Heart left ventricle (tissue), 16 donors: ENCODE measurements at regions of chr6 and their contacts with region 1.

Region 1: DNA sequence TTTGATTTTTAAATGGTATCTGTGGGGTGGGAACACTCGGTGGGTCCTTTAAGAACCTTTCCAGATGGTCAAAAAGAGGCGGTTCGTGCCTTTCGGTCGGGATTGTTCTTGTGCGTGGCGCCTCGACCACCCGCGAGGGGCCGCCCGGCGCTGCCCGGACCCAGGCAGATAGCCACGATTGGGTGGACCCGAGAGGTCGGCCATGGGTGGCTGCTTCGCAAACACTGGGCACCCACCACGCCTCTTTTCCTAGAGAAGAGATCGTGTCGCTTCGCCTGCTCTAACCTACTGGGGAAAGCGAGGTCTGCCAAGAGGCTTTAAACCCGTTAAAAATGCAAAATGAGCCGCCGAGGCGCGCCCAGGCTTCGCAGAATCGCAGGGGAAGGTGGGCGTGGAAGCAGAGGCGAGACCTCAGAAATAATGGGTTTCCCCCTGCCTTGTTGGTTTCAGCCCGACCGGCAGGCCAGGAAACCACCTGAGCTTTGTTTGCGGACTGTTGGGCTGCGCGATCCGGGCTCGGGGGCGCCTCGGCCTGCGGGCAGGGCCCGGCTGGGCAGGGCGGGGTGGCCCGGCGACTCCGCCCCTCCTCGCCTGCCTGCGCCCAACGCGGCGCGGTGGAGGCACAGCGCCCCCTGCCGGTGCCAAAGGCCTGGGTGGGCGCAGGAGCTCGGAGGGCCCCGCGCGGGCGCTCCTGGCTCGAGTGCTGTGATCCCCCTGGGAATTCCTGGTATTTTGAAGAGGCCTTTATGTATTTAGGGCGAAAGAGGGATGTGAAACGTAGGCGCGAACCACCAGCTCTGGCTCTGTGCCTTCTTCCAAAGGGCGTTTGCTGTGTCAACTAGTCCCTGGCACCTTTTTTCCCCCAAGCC is 1.6 kb downstream of the MARCKS start:
- DNase-seq: peak; percentile 82 to 95 (median 89)
- ATAC-seq: peak; percentile 80 to 95 (median 88)
- H3K4me3 ChIP-seq: peak overlapping the region; percentile 59 to 91 (median 70)
- H3K27ac ChIP-seq: peak overlapping the region; percentile 85 to 96 (median 92)
- H3K4me1 ChIP-seq: peaks cover 0 to 46% (median 10%) of the 10 kb centered on the region in 12 donors
- H3K27me3 ChIP-seq: peaks cover 0 to 15% (median 0%) of the 10 kb centered on the region in 9 donors
- CTCF ChIP-seq: peak; percentile 84 to 99 (median 95)
- POLR2A ChIP-seq: peak in 1 of 2 donors; percentile 76

Region 2: DNA sequence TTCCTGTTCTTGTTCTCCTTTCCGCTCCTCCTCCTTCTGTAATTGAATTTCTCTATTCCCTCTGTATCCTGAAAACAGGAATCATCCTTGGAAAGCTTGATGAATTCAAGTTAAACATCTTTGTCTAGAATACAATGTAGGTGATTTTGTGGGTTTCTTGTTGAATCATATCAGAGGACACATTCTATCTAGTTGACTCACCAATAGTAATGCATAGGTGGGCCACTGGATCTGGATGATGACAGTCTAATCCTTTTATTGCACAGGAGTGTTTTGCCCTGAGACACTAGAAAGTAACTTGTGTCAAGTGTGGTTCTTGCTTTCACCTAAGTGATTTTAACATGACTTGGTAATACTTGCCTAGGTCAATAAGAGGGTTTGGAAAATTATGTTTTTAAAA is 1347.3 kb before region 1 on chr6:
- intact Hi-C with region 1: no loop called
- DNase-seq: no peak
- ATAC-seq: no peak
- H3K4me3 ChIP-seq: no peak overlapping the region
- H3K27ac ChIP-seq: no peak overlapping the region
- H3K4me1 ChIP-seq: no peaks in the 10 kb centered on the region
- H3K27me3 ChIP-seq: no peaks in the 10 kb centered on the region
- CTCF ChIP-seq: no peak
- POLR2A ChIP-seq: no peak

Region 3: DNA sequence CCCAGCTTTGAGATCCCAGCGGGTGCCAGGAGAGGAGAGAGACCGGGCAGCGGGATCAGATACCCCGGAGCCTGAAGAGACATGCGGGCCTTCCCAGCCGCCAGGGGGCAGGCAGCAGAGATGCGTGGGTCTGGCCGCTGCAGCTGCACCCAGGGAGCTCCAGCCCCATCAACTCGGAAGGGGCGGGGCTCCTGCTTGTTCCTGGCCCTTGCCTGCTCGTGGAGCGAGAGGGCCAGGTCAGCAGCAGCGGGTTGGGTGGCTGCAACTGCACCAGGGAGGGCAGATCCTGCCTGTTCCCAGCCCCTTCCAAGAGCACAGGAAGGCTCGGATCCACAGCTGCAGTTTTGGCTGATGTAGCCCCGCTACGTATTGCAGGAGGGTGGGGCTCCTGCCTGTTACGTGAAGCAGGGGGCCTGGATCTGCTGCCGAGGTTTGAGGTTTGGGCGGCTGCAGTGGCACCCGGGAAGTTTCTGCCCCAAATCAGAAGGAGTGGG is 978.7 kb before region 1 on chr6:
- intact Hi-C with region 1: loop called in 1 of 10 experiments (anchors 5 kb)
- DNase-seq: peak in 3 of 5 donors; percentile 25 to 52 (median 39)
- ATAC-seq: peak in 2 of 4 donors; percentile 65 to 81
- H3K4me3 ChIP-seq: peak overlapping the region in 1 of 12 donors; percentile 10
- H3K27ac ChIP-seq: no peak overlapping the region
- H3K4me1 ChIP-seq: peaks cover 0 to 10% (median 0%) of the 10 kb centered on the region in 12 donors
- H3K27me3 ChIP-seq: no peaks in the 10 kb centered on the region
- CTCF ChIP-seq: peak in 2 of 12 donors; percentile 14 to 18
- POLR2A ChIP-seq: no peak

Region 4: DNA sequence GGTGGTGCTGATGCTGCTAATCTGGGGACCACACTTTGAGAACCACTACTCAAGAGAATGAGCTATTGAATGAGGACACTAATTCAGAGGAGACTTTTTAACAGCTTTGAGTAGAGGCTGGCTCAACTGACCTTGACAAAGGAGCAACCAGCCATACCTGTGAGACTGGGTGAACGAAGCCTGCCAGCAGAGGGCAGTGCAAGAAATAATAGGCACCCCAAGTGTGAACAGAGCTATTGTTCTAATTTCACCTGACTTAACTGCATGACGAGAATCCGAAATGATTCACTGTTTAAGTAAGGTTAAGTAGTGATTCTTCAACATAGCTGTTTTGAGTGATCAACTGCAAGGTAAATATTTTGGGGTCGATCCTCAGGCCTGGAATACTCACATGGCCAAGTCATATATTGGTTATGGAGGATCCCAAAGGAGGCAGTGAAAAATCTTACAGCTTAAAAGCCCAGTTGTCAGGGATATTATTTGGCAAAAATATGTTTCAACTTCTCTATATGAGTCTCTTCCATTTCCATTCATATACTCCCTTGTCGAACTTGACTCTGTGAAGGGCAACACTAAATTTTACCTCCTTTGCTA is 552.1 kb before region 1 on chr6:
- intact Hi-C with region 1: loop called in 8 of 10 experiments (anchors 2 to 10 kb)
- DNase-seq: peak in 4 of 5 donors; percentile 25 to 63 (median 51)
- ATAC-seq: peak in 3 of 4 donors; percentile 60 to 92 (median 76)
- H3K4me3 ChIP-seq: no peak overlapping the region
- H3K27ac ChIP-seq: no peak overlapping the region
- H3K4me1 ChIP-seq: no peaks in the 10 kb centered on the region
- H3K27me3 ChIP-seq: no peaks in the 10 kb centered on the region
- CTCF ChIP-seq: peak in 11 of 12 donors; percentile 28 to 71 (median 61)
- POLR2A ChIP-seq: no peak

Region 5: GRCh38 chr6:113564371-113565161 is 294.1 kb before region 1 on chr6:
- intact Hi-C with region 1: loop called in 9 of 10 experiments (anchors 1 to 10 kb)
- DNase-seq: peak; percentile 88 to 94 (median 89)
- ATAC-seq: peak; percentile 99 to 100 (median 100)
- H3K4me3 ChIP-seq: peak overlapping the region in 10 of 12 donors; percentile 23 to 50 (median 40)
- H3K27ac ChIP-seq: peak overlapping the region; percentile 8 to 87 (median 82)
- H3K4me1 ChIP-seq: peaks cover 0 to 18% (median 10%) of the 10 kb centered on the region in 12 donors
- H3K27me3 ChIP-seq: no peaks in the 10 kb centered on the region
- CTCF ChIP-seq: peak in 7 of 12 donors; percentile 16 to 47 (median 25)
- POLR2A ChIP-seq: no peak

Region 6: DNA sequence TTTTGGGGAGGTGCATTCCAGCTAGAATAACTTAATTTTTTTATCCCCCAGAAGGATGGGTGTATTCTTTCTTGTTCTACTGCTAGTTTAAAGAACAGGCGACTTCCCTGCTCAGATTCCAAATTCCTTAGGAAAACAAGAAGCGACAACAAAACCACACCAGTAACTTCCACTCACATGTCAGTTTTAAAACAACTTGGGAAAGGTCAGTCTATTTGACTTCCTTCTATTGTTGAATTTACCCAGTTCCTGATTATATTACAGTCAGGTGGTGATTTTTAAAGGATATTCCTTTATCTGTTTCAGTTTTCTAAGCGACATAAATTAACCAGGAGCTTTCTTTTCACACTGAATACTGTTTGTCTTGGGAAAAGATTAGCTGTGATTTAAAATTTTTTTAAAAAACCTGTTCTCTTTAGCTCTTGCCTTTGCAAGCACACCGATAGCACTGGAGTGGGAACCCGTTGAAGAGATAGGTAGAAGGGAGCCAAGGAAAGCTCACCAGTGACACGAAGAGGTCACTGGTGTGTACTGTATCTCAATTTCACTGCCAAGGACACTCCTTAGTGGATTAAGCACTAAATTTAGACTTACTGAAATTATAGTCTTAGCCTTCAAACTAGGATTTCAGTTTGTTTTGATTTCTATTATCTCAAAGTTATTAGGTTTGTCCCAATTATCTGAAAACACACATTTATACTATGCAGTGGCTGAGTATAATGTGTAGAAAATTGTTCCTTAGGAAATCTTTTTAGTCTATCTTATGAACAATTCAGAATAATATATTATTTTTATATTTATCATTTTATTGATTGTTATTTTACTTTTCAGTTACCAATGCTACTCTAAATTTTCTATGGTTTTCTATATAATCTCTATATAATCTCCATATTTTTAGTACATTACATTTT is 20.7 kb after region 1 on chr6:
- intact Hi-C with region 1: loop called in 1 of 10 experiments (anchors 2 kb)
- DNase-seq: peak in 4 of 5 donors; percentile 36 to 54 (median 44)
- ATAC-seq: peak; percentile 96 to 99 (median 98)
- H3K4me3 ChIP-seq: peak overlapping the region in 8 of 12 donors; percentile 4 to 30 (median 20)
- H3K27ac ChIP-seq: peak overlapping the region in 10 of 12 donors; percentile 16 to 52 (median 44)
- H3K4me1 ChIP-seq: peaks cover 0 to 15% (median 2%) of the 10 kb centered on the region in 12 donors
- H3K27me3 ChIP-seq: no peaks in the 10 kb centered on the region
- CTCF ChIP-seq: peak; percentile 56 to 82 (median 68)
- POLR2A ChIP-seq: no peak

Region 7: GRCh38 chr6:113930183-113930582 is 71.5 kb after region 1 on chr6:
- intact Hi-C with region 1: loop called in 1 of 10 experiments (anchors 5 kb)
- DNase-seq: no peak
- ATAC-seq: no peak
- H3K4me3 ChIP-seq: no peak overlapping the region
- H3K27ac ChIP-seq: no peak overlapping the region
- H3K4me1 ChIP-seq: peaks cover 0 to 7% (median 0%) of the 10 kb centered on the region in 12 donors
- H3K27me3 ChIP-seq: no peaks in the 10 kb centered on the region
- CTCF ChIP-seq: no peak
- POLR2A ChIP-seq: no peak

Region 8: GRCh38 chr6:114119056-114119455 is 260.3 kb after region 1 on chr6:
- intact Hi-C with region 1: no loop called
- DNase-seq: no peak
- ATAC-seq: no peak
- H3K4me3 ChIP-seq: no peak overlapping the region
- H3K27ac ChIP-seq: no peak overlapping the region
- H3K4me1 ChIP-seq: no peaks in the 10 kb centered on the region
- H3K27me3 ChIP-seq: peaks cover 0 to 17% (median 0%) of the 10 kb centered on the region in 9 donors
- CTCF ChIP-seq: no peak
- POLR2A ChIP-seq: no peak